K562 (cell line): ENCODE measurements at regions of chr3 and their contacts with region 1.

Region 1: DNA sequence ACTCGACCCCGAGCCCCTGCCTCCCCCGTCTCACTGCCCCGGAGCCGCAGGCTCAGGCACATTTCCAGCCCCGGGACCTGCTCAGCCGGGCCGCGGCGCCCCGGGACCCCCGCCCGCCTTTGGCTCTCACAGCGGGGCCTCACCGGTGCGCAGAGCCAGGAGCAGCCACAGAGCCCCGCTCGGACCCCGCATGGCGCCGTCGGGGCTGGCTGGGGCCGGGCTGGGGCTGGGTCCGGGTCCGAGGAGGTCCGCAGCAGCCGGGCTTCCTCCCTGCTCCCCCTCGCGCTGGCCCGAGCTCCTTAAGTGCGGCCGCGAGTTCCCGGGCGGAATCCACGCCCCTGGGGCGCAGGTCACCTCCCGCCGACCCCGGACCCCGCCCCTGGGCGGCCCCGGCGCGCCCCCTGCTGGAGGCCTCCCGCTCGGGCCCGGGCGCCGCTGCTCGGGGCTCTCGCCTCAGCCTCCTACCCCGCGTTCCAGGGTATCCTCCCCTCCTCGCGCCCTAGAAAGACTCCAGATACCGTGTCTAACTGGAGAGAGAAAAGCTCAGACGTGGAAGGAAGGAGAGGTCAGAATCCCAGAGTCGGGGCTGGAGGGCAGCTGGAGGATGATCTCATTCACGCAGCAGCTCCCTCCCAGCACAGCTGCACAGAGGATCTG is at the start of gene MELTF:
- DNase-seq: peak; percentile 88 to 97 (median 96)
- ATAC-seq: peak; percentile 88
- H3K4me3 ChIP-seq: peak within 1 kb of the TSS; percentile 84
- H3K27ac ChIP-seq: peak within 1 kb of the TSS; percentile 85
- H3K4me1 ChIP-seq: peaks cover 25 to 53% of the 10 kb centered on the region in 2 experiments
- H3K27me3 ChIP-seq: no peaks in the 10 kb centered on the region
- CTCF ChIP-seq: peak; percentile 79 to 89 (median 84)
- EP300 ChIP-seq: no peak
- POLR2A ChIP-seq: peak; percentile 65
- RAD21 ChIP-seq: peak; percentile 65
- polyA plus RNA-seq, gene MELTF: 0.35 to 0.52 TPM

Region 2: DNA sequence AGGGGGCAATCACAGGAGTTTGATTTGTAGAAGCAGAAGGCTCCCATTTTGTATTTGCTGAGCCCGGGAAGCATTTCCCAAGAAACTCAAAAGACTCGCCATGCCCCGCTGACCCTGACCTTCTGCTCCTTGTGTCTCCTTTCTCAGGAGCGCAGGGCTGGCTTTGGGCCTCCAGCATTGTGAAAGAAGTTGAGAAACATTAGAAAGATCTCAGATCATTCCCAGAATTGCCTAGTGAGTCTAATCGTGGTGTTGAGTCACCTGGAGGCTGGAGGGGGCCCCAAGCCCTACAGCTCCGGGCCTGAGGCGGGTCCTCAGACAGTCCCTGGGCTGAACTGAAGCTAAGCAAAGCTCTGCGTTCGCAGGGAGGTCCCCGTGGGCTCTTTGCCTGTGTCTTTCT is 50.1 kb before region 1 on chr3:
- CTCF ChIA-PET with region 1: no interaction called
- POLR2A ChIA-PET with region 1: interaction called, 3 read pairs
- in situ Hi-C with region 1: no loop called
- intact Hi-C with region 1: loop called (anchors 2 kb)
- DNase-seq: peak in 3 of 4 experiments; percentile 25 to 52 (median 51)
- ATAC-seq: peak; percentile 52
- H3K4me3 ChIP-seq: no peak overlapping the region
- H3K27ac ChIP-seq: no peak overlapping the region
- H3K4me1 ChIP-seq: peaks cover 14 to 17% of the 10 kb centered on the region in 2 experiments; a peak in 4 of 5 replicates
- H3K27me3 ChIP-seq: no peaks in the 10 kb centered on the region
- CTCF ChIP-seq: no peak
- EP300 ChIP-seq: no peak
- POLR2A ChIP-seq: no peak
- RAD21 ChIP-seq: no peak